Mammary epithelial cell (primary cell): ENCODE measurements at regions of chr6 and their contacts with region 1.

Region 1: DNA sequence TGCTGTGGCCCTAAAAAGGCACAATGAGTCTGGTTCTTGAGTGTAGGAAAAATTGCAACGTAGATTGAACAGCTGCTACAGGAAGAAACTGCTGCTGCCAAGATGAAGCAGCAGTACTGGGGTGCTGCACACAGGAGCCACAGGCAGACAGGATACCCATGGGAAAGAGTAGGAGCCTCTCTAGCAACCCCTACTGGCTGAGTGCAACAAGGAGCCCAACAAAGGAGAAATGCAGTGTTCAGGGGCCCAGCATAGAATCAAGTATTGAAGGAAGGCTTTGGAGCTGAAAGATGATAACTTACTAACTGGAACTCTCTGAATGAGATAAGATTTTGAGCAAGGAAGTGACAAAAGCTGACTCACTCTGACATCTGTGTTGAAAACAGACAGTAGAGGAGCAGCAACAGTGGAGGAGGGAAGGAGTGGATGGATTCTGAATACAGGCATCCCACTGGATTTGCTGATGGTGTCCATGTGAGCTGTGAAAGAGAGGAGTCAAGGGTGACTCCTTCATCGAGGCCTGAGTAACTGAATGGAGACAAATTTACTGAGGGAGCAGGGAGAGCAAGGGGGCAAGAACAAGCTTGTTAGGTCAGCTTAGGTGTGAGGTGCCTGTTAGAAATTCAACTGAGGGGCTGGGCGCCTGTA is 534.7 kb upstream of the JARID2 start:
- DNase-seq: peak; percentile 78
- H3K4me3 ChIP-seq: no peak overlapping the region
- H3K27ac ChIP-seq: peak overlapping the region; percentile 67
- H3K4me1 ChIP-seq: peaks cover 49% of the 10 kb centered on the region
- H3K27me3 ChIP-seq: no peaks in the 10 kb centered on the region
- CTCF ChIP-seq: peak; percentile 70 to 86

Region 2: GRCh38 chr6:14270925-14271791 is 440.0 kb before region 1 on chr6:
- CTCF ChIA-PET with region 1: no interaction called
- dilution Hi-C with region 1: no loop called
- in situ Hi-C with region 1: no loop called
- intact Hi-C with region 1: loop called (anchors 5 kb)
- DNase-seq: peak; percentile 100
- H3K4me3 ChIP-seq: no peak overlapping the region
- H3K27ac ChIP-seq: peak overlapping the region; percentile 98
- H3K4me1 ChIP-seq: peaks cover 50% of the 10 kb centered on the region
- H3K27me3 ChIP-seq: no peaks in the 10 kb centered on the region
- CTCF ChIP-seq: peak in 1 of 2 donors; percentile 39

Region 3: DNA sequence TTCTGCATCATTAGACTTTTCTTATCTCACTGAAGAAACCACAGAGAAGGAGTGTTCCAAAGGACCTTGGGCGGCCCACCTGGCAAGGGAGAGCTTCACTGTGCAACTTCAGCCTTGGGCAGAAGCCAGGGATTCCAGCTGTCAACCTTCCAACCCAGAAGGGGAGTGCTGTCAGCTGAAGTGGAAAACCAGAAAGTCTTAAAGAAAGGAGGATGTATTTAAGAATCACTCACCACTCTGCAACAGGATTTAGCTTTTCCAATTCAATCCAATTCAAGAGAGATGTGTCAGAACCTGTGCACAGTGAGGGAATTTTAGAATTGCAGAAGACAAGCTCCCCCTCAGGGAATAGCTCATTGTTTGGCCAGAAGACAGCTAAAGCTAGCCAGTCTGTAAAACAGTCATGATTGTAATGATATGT is 39.9 kb before region 1 on chr6:
- CTCF ChIA-PET with region 1: no interaction called
- dilution Hi-C with region 1: loop called (anchors 5 kb)
- in situ Hi-C with region 1: no loop called
- intact Hi-C with region 1: no loop called
- DNase-seq: peak; percentile 84
- H3K4me3 ChIP-seq: no peak overlapping the region
- H3K27ac ChIP-seq: no peak overlapping the region
- H3K4me1 ChIP-seq: peaks cover 17% of the 10 kb centered on the region
- H3K27me3 ChIP-seq: no peaks in the 10 kb centered on the region
- CTCF ChIP-seq: no peak

Region 4: GRCh38 chr6:14743465-14744211 is 32.5 kb after region 1 on chr6:
- CTCF ChIA-PET with region 1: interaction called, 3 read pairs
- dilution Hi-C with region 1: no loop called
- in situ Hi-C with region 1: no loop called
- intact Hi-C with region 1: loop called (anchors 1 kb)
- DNase-seq: peak; percentile 99
- H3K4me3 ChIP-seq: no peak overlapping the region
- H3K27ac ChIP-seq: peak overlapping the region; percentile 99
- H3K4me1 ChIP-seq: peaks cover 31% of the 10 kb centered on the region
- H3K27me3 ChIP-seq: no peaks in the 10 kb centered on the region
- CTCF ChIP-seq: no peak

Region 5: GRCh38 chr6:14770572-14770971 is 59.4 kb after region 1 on chr6:
- CTCF ChIA-PET with region 1: no interaction called
- dilution Hi-C with region 1: no loop called
- in situ Hi-C with region 1: no loop called
- intact Hi-C with region 1: no loop called
- DNase-seq: no peak
- H3K4me3 ChIP-seq: no peak overlapping the region
- H3K27ac ChIP-seq: no peak overlapping the region
- H3K4me1 ChIP-seq: no peaks in the 10 kb centered on the region
- H3K27me3 ChIP-seq: no peaks in the 10 kb centered on the region
- CTCF ChIP-seq: no peak

Region 6: DNA sequence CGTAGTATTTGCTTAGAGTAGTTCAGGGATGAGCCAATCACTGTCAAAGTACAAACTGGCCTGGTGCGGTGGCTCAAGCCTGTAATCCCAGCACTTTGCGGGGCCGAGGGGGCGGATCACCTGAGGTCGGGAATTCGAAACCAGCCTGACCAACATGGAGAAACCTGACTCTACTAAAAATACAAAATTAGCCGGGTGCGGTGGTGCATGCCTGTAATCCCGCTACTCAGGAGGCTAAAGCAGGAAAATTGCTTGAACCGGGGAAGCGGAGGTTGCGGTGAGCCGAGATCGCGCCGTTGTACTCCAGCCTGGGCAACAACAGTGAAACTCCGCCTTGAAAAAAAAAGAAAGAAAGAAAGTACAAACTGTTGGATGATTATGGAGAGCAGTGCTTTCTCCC is 507.2 kb after region 1 on chr6:
- CTCF ChIA-PET with region 1: no interaction called
- dilution Hi-C with region 1: no loop called
- in situ Hi-C with region 1: no loop called
- intact Hi-C with region 1: no loop called
- DNase-seq: no peak
- H3K4me3 ChIP-seq: no peak overlapping the region
- H3K27ac ChIP-seq: no peak overlapping the region
- H3K4me1 ChIP-seq: no peaks in the 10 kb centered on the region
- H3K27me3 ChIP-seq: no peaks in the 10 kb centered on the region
- CTCF ChIP-seq: no peak

Region 7: DNA sequence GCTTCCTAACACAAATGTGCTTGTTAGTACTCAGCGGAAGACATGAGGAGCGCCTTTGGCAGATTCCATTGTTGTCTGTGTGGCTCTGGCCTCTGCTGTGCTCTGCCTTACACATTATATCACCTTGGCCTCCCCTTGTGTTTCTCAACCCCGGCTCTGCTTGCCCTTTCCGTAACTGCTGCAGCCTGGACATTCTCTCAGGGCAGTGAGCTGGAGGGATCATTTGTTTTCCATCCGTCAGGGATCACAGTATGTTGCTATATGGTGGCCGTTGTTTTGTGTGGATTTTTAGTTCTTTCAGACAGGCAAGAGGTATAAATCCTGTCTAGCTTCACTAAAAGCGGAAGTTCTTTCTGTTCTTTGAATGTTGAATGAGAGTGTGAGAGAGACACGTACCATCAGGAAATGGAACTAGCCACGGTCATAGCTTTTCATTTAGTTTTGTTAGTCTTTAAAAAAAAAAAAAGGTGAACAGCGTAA is 709.8 kb after region 1 on chr6:
- CTCF ChIA-PET with region 1: interaction called, 11 read pairs
- dilution Hi-C with region 1: no loop called
- in situ Hi-C with region 1: no loop called
- intact Hi-C with region 1: no loop called
- DNase-seq: no peak
- H3K4me3 ChIP-seq: no peak overlapping the region
- H3K27ac ChIP-seq: no peak overlapping the region
- H3K4me1 ChIP-seq: peaks cover 16% of the 10 kb centered on the region
- H3K27me3 ChIP-seq: no peaks in the 10 kb centered on the region
- CTCF ChIP-seq: no peak

Region 8: GRCh38 chr6:15621203-15622044 is 910.2 kb after region 1 on chr6:
- CTCF ChIA-PET with region 1: no interaction called
- dilution Hi-C with region 1: no loop called
- in situ Hi-C with region 1: no loop called
- intact Hi-C with region 1: loop called (anchors 10 kb)
- DNase-seq: peak; percentile 73
- H3K4me3 ChIP-seq: no peak overlapping the region
- H3K27ac ChIP-seq: peak overlapping the region; percentile 43
- H3K4me1 ChIP-seq: peaks cover 15% of the 10 kb centered on the region
- H3K27me3 ChIP-seq: no peaks in the 10 kb centered on the region
- CTCF ChIP-seq: no peak